ENCODE measurements at regions of chr9 and their contacts with region 1.

Region 1: DNA sequence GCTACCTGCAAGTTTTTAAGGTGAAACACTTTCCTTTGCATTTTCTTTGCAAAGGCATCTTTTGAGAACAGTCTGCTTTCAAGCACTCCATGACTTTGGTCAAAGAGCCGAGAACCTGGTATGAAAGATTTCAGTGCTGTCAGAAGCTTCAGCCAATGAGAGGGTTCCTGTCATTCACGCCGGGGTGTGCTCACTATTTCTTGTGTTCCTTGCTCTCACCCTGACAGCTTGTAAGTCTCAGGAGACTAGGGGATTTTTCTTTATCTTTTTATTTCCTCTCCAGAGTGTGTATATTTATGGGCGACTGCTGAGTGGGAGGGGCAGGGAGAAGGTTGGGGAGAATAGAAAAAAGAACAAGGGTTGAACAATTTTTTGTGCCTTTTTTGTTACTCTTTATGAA is 334.0 kb downstream of the PSAT1 start:
- DNase-seq: no peak
- H3K4me3 ChIP-seq: no peak overlapping the region
- H3K27ac ChIP-seq: no peak overlapping the region
- H3K4me1 ChIP-seq: no peaks in the 10 kb centered on the region
- H3K27me3 ChIP-seq: no peaks in the 10 kb centered on the region
- CTCF ChIP-seq: no peak
- POLR2A ChIP-seq: no peak

Region 2: DNA sequence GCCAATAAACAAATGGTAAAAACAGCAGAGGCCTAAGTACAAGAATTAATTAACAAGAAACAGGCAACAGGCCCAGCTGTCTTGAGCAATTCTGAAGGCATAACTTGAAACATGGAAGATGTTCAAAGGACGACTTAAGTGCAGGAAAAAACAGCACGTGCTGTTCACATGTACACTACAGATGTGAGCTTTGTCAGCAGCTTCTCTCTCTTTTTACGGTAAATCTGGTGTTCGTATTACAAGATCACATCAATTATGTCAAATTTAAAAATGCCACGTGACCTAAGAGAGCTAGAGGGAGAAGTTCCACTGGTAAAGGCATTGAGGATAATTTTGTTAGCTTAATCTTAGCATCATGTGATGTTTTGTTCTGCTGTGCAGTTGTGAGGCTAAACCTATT is 52.9 kb before region 1 on chr9:
- intact Hi-C with region 1: no loop called
- DNase-seq: no peak
- H3K4me3 ChIP-seq: no peak overlapping the region
- H3K27ac ChIP-seq: no peak overlapping the region
- H3K4me1 ChIP-seq: peaks cover 5% of the 10 kb centered on the region
- H3K27me3 ChIP-seq: no peaks in the 10 kb centered on the region
- CTCF ChIP-seq: no peak
- POLR2A ChIP-seq: no peak

Region 3: GRCh38 chr9:79408617-79409016 is 777.7 kb after region 1 on chr9:
- intact Hi-C with region 1: loop called (anchors 5 kb)
- DNase-seq: no peak
- H3K4me3 ChIP-seq: no peak overlapping the region
- H3K27ac ChIP-seq: no peak overlapping the region
- H3K4me1 ChIP-seq: no peaks in the 10 kb centered on the region
- H3K27me3 ChIP-seq: no peaks in the 10 kb centered on the region
- CTCF ChIP-seq: no peak
- POLR2A ChIP-seq: no peak